Activated naive CD4-positive, alpha-beta T cell treated with anti-CD3 and anti-CD28 coated beads for 36 hours (primary cell): ENCODE measurements at regions of chr12 and their contacts with region 1.

Region 1: GRCh38 chr12:50084775-50085614 is at the start of gene SMARCD1:
- DNase-seq: peak; percentile 88
- H3K4me3 Mint-ChIP-seq: peak within 1 kb of the TSS; percentile 89
- H3K27ac Mint-ChIP-seq: peak within 1 kb of the TSS; percentile 93
- H3K4me1 Mint-ChIP-seq: peaks cover 42% of the 10 kb centered on the region
- H3K27me3 Mint-ChIP-seq: no peaks in the 10 kb centered on the region
- total RNA-seq, gene SMARCD1: 57.7 to 60.2 TPM

Region 2: GRCh38 chr12:50103767-50104321 is 18.8 kb after region 1 on chr12 and contains the start of gene GPD1:
- CTCF ChIA-PET with region 1: interaction called, 21 read pairs
- intact Hi-C with region 1: no loop called
- DNase-seq: no peak
- H3K4me3 Mint-ChIP-seq: no peak within 1 kb of the TSS
- H3K27ac Mint-ChIP-seq: no peak within 1 kb of the TSS
- H3K4me1 Mint-ChIP-seq: peaks cover 2% of the 10 kb centered on the region
- H3K27me3 Mint-ChIP-seq: no peaks in the 10 kb centered on the region
- total RNA-seq, gene GPD1: 0.36 to 0.47 TPM

Region 3: GRCh38 chr12:50132505-50133135 is 47.6 kb after region 1 on chr12:
- CTCF ChIA-PET with region 1: interaction called, 4 read pairs
- intact Hi-C with region 1: loop called (anchors 5 kb)
- DNase-seq: no peak
- H3K4me3 Mint-ChIP-seq: no peak overlapping the region
- H3K27ac Mint-ChIP-seq: peak overlapping the region; percentile 81
- H3K4me1 Mint-ChIP-seq: peaks cover 8% of the 10 kb centered on the region
- H3K27me3 Mint-ChIP-seq: no peaks in the 10 kb centered on the region